AG04450 (cell line): ENCODE measurements at regions of chr2 and their contacts with region 1.

Region 1: GRCh38 chr2:68121873-68122679 is 35.6 kb upstream of the PNO1 start:
- DNase-seq: peak; percentile 82
- H3K4me3 ChIP-seq: no peak overlapping the region
- H3K27ac ChIP-seq: no peak overlapping the region
- H3K27me3 ChIP-seq: peaks cover 4% of the 10 kb centered on the region
- CTCF ChIP-seq: peak; percentile 98

Region 2: GRCh38 chr2:68108120-68108519 is 14.0 kb before region 1 on chr2:
- CTCF ChIA-PET with region 1: interaction called, 13 read pairs
- POLR2A ChIA-PET with region 1: no interaction called
- DNase-seq: no peak
- H3K4me3 ChIP-seq: no peak overlapping the region
- H3K27ac ChIP-seq: no peak overlapping the region
- H3K27me3 ChIP-seq: no peaks in the 10 kb centered on the region
- CTCF ChIP-seq: no peak

Region 3: GRCh38 chr2:68244456-68244855 is 122.4 kb after region 1 on chr2:
- CTCF ChIA-PET with region 1: interaction called, 20 read pairs
- POLR2A ChIA-PET with region 1: no interaction called
- DNase-seq: no peak
- H3K4me3 ChIP-seq: no peak overlapping the region
- H3K27ac ChIP-seq: no peak overlapping the region
- H3K27me3 ChIP-seq: no peaks in the 10 kb centered on the region
- CTCF ChIP-seq: peak; percentile 31; the same call in 1 of the 2 replicates

Region 4: GRCh38 chr2:68251187-68251854 is 129.2 kb after region 1 on chr2:
- CTCF ChIA-PET with region 1: interaction called, 20 read pairs
- POLR2A ChIA-PET with region 1: interaction called, 3 read pairs
- DNase-seq: no peak
- H3K4me3 ChIP-seq: peak overlapping the region; percentile 79
- H3K27ac ChIP-seq: peak overlapping the region; percentile 83
- H3K27me3 ChIP-seq: no peaks in the 10 kb centered on the region
- CTCF ChIP-seq: peak; percentile 81

Region 5: GRCh38 chr2:68282811-68283418 is 160.8 kb after region 1 on chr2:
- CTCF ChIA-PET with region 1: interaction called, 70 read pairs
- POLR2A ChIA-PET with region 1: no interaction called
- DNase-seq: no peak
- H3K4me3 ChIP-seq: no peak overlapping the region
- H3K27ac ChIP-seq: no peak overlapping the region
- H3K27me3 ChIP-seq: no peaks in the 10 kb centered on the region
- CTCF ChIP-seq: peak; percentile 88

Region 6: GRCh38 chr2:68295516-68295915 is 173.4 kb after region 1 on chr2:
- CTCF ChIA-PET with region 1: interaction called, 38 read pairs
- POLR2A ChIA-PET with region 1: no interaction called
- DNase-seq: no peak
- H3K4me3 ChIP-seq: no peak overlapping the region
- H3K27ac ChIP-seq: no peak overlapping the region
- H3K27me3 ChIP-seq: no peaks in the 10 kb centered on the region
- CTCF ChIP-seq: no peak

Region 7: GRCh38 chr2:68357605-68358337 is 235.7 kb after region 1 on chr2:
- CTCF ChIA-PET with region 1: interaction called, 13 read pairs
- POLR2A ChIA-PET with region 1: no interaction called
- DNase-seq: peak; percentile 18
- H3K4me3 ChIP-seq: no peak overlapping the region
- H3K27ac ChIP-seq: no peak overlapping the region
- H3K27me3 ChIP-seq: no peaks in the 10 kb centered on the region
- CTCF ChIP-seq: peak; percentile 75